ENCODE measurements at regions of chr6 and their contacts with region 1.

Region 1: GRCh38 chr6:26216356-26216885 is 129.2 kb downstream of the HFE start:
- DNase-seq: peak; percentile 84
- H3K4me3 ChIP-seq: peak overlapping the region; percentile 43
- H3K27ac ChIP-seq: peak overlapping the region; percentile 97
- H3K4me1 ChIP-seq: peaks cover 3% of the 10 kb centered on the region
- H3K27me3 ChIP-seq: no peaks in the 10 kb centered on the region
- CTCF ChIP-seq: no peak

Region 2: GRCh38 chr6:26183581-26184366 is 32.6 kb before region 1 on chr6:
- intact Hi-C with region 1: no loop called
- DNase-seq: peak; percentile 78
- H3K4me3 ChIP-seq: peak overlapping the region; percentile 38
- H3K27ac ChIP-seq: peak overlapping the region; percentile 85
- H3K4me1 ChIP-seq: no peaks in the 10 kb centered on the region
- H3K27me3 ChIP-seq: no peaks in the 10 kb centered on the region
- CTCF ChIP-seq: no peak

Region 3: GRCh38 chr6:26270903-26271667 is 54.7 kb after region 1 on chr6:
- intact Hi-C with region 1: no loop called
- DNase-seq: peak; percentile 91
- H3K4me3 ChIP-seq: peak overlapping the region; percentile 37
- H3K27ac ChIP-seq: peak overlapping the region; percentile 89
- H3K4me1 ChIP-seq: no peaks in the 10 kb centered on the region
- H3K27me3 ChIP-seq: no peaks in the 10 kb centered on the region
- CTCF ChIP-seq: no peak

Region 4: DNA sequence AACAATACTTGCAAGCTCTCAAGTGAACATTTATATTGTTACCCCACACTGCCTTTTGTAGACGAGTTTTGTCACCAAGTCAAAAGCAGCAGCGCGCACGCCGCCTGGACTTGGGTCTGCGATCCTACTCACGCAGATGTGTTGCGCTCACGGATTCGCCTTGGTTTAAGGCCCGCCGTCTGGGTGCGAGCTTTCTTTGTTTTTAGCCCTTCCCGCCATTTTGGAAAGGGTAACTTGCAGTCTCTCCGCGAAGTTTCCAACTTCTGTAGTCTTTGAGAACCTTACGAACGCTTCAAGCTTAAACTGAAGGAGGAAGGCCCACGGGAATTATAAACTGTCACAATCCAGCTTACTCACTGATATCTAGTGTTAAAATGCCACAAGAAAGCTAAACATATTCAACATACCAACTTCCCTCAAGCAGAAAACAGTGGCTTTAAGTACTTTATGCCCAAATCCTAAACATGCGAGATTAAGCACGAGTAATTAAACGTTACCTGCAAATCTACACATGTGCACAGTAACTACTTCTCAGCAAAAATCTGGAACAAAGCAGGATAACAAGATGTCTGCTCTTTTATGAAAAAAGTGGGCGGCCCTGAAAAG is 68.2 kb after region 1 on chr6:
- intact Hi-C with region 1: loop called (anchors 5 kb)
- DNase-seq: peak; percentile 63
- H3K4me3 ChIP-seq: peak overlapping the region; percentile 37
- H3K27ac ChIP-seq: peak overlapping the region; percentile 94
- H3K4me1 ChIP-seq: no peaks in the 10 kb centered on the region
- H3K27me3 ChIP-seq: no peaks in the 10 kb centered on the region
- CTCF ChIP-seq: no peak